GM10248 (cell line): ENCODE measurements at regions of chr2 and their contacts with region 1.

Region 1: GRCh38 chr2:16608661-16609643 is 56.7 kb downstream of the CYRIA start:
- DNase-seq: peak; percentile 76
- CTCF ChIP-seq: peak; percentile 93

Region 2: DNA sequence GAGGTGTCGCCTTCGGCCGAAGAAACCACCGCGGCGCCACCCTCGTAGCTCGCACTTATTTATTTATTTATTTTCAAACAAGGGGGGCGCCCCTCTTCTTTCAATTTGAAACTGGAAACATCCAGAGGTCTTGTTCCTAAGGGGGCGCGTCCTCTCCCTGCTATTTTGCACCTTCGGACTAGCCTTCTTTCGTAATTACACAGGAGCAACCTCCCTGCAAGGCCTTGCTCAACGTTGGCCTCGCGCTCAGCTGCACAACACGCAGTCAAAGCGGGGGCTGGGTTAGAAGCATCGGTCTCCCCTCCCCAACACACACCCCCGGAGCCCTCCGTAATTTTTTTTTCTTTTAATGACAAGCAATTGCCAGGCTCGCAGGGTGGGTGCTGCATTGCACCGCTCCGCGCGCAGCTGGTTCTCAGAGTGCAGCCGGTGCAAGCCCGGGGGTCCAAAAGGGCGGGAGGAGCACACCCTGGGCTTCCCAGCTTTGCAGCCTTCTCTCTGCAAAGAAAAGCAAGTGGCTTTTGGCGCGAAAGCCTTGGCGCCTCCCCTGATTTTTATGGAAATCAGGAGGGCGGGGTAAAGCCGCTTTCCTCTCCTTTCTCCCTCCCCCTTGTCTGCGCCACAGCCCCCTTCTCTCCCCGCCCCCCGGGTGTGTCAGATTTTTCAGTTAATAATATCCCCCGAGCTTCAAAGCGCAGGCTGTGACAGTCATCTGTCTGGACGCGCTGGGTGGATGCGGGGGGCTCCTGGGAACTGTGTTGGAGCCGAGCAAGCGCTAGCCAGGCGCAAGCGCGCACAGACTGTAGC is 668.9 kb before region 1 on chr2 and contains the start of gene MYCN:
- CTCF ChIA-PET with region 1: interaction called, 14 read pairs
- POLR2A ChIA-PET with region 1: no interaction called
- DNase-seq: no peak
- CTCF ChIP-seq: no peak

Region 3: GRCh38 chr2:16012619-16013358 is 596.2 kb before region 1 on chr2:
- CTCF ChIA-PET with region 1: no interaction called
- POLR2A ChIA-PET with region 1: no interaction called
- DNase-seq: no peak
- CTCF ChIP-seq: no peak

Region 4: GRCh38 chr2:16525265-16525887 is 83.6 kb before region 1 on chr2:
- CTCF ChIA-PET with region 1: interaction called, 23 read pairs
- POLR2A ChIA-PET with region 1: no interaction called
- DNase-seq: peak; percentile 44
- CTCF ChIP-seq: peak; percentile 55

Region 5: DNA sequence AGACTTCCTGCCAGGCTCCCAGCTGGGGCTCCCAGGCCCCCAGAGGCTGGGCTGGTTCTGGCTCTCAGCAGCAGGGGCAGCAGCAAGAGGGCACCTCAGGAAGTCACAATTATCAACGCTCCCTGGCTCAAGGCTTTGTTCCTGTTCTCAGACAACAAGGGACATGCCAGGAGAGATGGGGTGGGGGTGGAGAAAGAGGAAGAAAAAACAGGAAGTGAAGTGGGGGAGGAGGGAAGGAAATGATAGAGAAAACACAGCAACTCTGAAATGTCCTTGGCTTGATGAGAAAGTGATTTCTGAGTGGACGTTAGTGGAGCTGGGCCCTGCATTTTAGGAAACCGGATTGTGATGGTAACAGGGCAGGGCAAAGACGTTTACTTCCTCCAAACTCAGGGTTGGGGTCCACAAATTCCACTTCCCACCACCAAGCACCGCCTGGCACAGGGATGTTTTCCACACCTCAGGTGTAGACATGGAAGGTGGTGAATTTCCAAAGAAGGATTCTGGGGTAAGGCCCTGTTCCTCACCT is 16.3 kb after region 1 on chr2:
- CTCF ChIA-PET with region 1: interaction called, 43 read pairs
- POLR2A ChIA-PET with region 1: no interaction called
- DNase-seq: no peak
- CTCF ChIP-seq: no peak

Region 6: DNA sequence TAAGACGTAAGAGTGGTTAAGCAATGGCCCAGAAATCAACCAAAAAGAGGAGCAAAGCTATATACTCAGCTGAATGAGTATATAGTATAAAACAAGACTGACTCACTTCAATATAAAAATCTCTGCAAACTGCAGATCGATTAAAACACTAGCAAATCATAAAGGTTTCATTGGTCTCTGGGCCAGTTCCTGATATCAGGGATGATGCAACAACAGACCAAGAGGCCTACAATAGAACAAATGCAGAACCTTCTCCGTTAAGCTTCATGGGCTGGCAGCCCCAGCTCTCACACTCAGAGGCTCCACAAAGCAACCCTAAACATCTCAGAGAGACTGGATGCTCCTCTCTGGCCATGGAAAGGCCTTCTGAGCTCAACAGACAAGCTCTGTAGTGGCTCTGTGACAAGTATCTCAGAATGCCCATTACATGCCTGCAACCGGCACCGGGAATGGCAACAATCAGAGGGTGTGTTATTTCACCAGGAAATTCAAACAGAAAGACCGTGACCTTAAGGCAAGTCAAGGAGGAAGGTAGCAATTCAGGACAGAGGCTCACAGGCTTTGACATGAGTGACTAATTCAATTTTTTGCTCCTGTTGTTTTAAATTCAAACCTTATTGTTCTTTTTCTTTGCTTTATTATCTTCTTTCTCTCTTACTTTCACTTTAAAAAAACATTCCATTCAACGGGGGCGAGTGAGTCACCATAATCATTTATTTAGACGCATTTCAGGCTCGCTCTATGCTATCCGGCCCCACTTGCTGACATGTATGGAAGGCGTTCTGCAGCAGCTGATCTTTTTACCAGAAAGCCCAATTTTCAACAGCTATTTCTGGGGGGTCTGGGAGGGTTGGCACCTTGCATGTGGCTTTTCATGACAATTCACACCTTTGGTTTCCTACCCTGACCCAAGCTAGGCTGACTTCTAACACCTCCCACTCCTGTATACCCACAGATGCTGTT is 41.6 kb after region 1 on chr2:
- CTCF ChIA-PET with region 1: interaction called, 10 read pairs
- POLR2A ChIA-PET with region 1: no interaction called
- DNase-seq: no peak
- CTCF ChIP-seq: no peak